Heart right ventricle (tissue), 16 donors: ENCODE measurements at regions of chrX and their contacts with region 1.

Region 1: DNA sequence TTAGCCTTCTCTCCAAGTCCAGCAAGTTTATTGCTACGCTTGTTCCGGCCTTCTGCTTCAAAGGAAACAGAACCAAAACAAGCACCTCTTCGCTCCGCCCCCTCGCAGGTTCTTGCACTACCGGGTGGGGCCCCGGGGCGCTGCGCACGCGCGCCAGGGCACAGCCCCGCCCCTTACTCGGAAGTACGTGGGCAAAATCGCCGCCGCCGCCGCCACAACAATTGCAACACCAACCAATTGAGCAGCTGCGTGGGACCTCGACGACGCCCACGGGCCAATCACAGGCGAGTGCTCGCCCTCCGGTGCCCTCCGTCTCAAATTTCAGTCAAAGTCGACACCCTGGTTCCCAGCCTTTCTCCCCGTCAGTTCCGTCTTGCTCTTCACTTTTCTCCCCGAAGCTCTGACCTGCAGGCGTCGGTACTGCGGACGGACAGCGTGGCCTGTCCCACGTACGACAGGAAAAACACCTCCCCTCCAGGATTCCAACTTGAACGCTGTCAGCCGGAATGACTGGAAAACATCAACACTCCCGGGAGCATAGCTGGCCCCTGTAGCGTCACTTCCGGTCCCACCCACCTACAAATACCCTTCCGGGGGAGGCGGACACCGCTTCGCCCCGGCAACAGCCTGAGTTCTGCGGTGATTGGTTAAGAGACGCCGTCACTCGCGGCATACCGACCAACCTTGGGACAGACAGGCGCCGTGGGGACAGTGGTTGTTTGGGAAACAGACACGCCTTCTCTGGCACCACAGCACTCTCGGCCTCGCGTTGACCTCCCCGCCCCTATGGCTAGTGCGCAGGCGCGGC is 624 bp upstream of the OTUD5 start:
- DNase-seq: peak; percentile 92 to 96
- ATAC-seq: peak; percentile 92 to 97 (median 96)
- H3K4me3 ChIP-seq: peak overlapping the region; percentile 21 to 72 (median 64)
- H3K27ac ChIP-seq: peak overlapping the region; percentile 75 to 99 (median 95)
- H3K4me1 ChIP-seq: peaks cover 0 to 51% (median 31%) of the 10 kb centered on the region in 9 donors
- H3K27me3 ChIP-seq: no peaks in the 10 kb centered on the region
- CTCF ChIP-seq: no peak

Region 2: GRCh38 chrX:49002091-49002935 is 44.3 kb after region 1 on chrX and contains the start of gene GRIPAP1:
- intact Hi-C with region 1: loop called in 1 of 10 experiments (anchors 5 kb)
- DNase-seq: peak; percentile 66 to 74
- ATAC-seq: peak; percentile 88 to 98 (median 94)
- H3K4me3 ChIP-seq: peak within 1 kb of the TSS; percentile 47 to 82 (median 75)
- H3K27ac ChIP-seq: peak within 1 kb of the TSS; percentile 35 to 94 (median 84)
- H3K4me1 ChIP-seq: peaks cover 0 to 9% (median 0%) of the 10 kb centered on the region in 9 donors
- H3K27me3 ChIP-seq: no peaks in the 10 kb centered on the region
- CTCF ChIP-seq: no peak
- total RNA-seq, gene GRIPAP1: 16.2 to 26.0 (median 21.9) TPM